IMR-90 (cell line): ENCODE measurements at regions of chr7 and their contacts with region 1.

Region 1: GRCh38 chr7:32891800-32892520 is 400 bp upstream of the KBTBD2 start:
- DNase-seq: peak; percentile 92
- ATAC-seq: peak; percentile 79
- H3K4me3 ChIP-seq: peak overlapping the region; percentile 86
- H3K27ac ChIP-seq: peak overlapping the region; percentile 99
- H3K4me1 ChIP-seq: peaks cover 2% of the 10 kb centered on the region; the same call in 1 of the 2 replicates
- H3K27me3 ChIP-seq: no peaks in the 10 kb centered on the region
- CTCF ChIP-seq: no peak
- POLR2A ChIP-seq: peak; percentile 39; the same call in 1 of the 2 replicates
- RAD21 ChIP-seq: no peak

Region 2: DNA sequence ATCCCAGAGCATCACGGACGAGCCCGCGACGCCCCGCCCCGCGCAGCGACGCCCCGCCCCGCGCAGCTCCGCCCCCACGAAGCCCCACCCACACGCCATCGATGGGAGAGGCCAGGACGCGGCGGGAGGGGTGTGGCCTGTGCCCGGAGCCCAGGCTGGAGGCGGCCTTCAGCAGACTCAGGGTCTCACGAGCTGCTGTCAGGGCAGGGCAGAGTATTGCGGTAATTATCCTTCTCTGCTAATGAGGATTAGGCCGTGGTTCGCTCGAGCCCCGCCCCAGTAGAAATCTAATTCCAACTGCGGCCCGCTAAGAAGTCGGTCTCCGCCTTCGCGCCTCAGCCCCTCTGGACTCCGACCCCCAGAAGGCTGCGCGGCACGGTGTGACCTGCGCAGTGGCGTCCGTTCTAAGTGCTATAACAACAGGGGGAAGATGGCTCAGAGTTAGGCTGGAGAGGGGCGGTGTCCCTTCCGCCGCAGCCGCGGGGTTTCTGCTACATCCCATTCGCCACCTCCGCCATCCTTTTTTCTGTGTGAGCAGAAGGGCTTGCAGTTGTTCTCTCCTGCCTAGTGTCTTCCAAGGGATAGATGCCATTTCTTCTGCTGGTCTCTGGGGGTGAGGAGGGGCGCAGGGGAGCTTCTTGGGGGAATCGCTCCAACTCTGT is 171.0 kb after region 1 on chr7:
- CTCF ChIA-PET with region 1: no interaction called
- POLR2A ChIA-PET with region 1: no interaction called
- dilution Hi-C with region 1: no loop called
- in situ Hi-C with region 1: no loop called
- intact Hi-C with region 1: loop called (anchors 5 kb)
- DNase-seq: peak; percentile 93
- ATAC-seq: peak; percentile 98
- H3K4me3 ChIP-seq: peak overlapping the region; percentile 72
- H3K27ac ChIP-seq: peak overlapping the region; percentile 97
- H3K4me1 ChIP-seq: no peaks in the 10 kb centered on the region
- H3K27me3 ChIP-seq: no peaks in the 10 kb centered on the region
- CTCF ChIP-seq: no peak
- POLR2A ChIP-seq: peak; percentile 60; the same call in 1 of the 2 replicates
- RAD21 ChIP-seq: no peak